B cell (primary cell): ENCODE measurements at regions of chr9 and their contacts with region 1.

Region 1: GRCh38 chr9:37156781-37157356 is 36.5 kb downstream of the ZCCHC7 start:
- DNase-seq: no peak
- ATAC-seq: no peak
- H3K4me3 ChIP-seq: no peak overlapping the region
- H3K4me3 Mint-ChIP-seq: no peak overlapping the region
- H3K27ac ChIP-seq: no peak overlapping the region
- H3K27ac Mint-ChIP-seq: no peak overlapping the region
- H3K4me1 ChIP-seq: peaks cover 14 to 19% of the 10 kb centered on the region in 2 donors
- H3K4me1 Mint-ChIP-seq: peaks cover 33% of the 10 kb centered on the region
- H3K27me3 ChIP-seq: no peaks in the 10 kb centered on the region
- H3K27me3 Mint-ChIP-seq: no peaks in the 10 kb centered on the region
- CTCF ChIP-seq: no peak

Region 2: DNA sequence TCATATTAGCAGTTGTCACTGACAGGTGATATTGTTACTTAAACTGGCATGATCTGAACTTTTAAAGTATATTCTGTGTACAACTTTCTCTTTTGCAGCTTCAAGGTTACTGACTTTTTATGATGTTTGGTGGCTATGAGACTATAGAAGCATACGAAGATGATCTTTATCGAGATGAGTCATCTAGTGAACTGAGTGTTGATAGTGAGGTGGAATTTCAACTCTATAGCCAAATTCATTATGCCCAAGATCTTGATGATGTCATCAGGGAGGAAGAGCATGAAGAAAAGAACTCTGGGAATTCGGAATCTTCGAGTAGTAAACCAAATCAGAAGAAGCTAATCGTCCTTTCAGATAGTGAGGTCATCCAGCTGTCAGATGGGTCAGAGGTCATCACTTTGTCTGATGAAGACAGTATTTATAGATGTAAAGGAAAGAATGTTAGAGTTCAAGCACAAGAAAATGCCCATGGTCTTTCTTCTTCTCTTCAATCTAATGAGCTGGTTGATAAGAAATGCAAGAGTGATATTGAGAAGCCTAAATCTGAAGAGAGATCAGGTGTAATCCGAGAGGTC is 30.6 kb before region 1 on chr9:
- CTCF ChIA-PET with region 1: no interaction called
- POLR2A ChIA-PET with region 1: interaction called, 10 read pairs
- intact Hi-C with region 1: no loop called
- DNase-seq: no peak
- ATAC-seq: no peak
- H3K4me3 ChIP-seq: no peak overlapping the region
- H3K4me3 Mint-ChIP-seq: no peak overlapping the region
- H3K27ac ChIP-seq: peak overlapping the region in 1 of 2 donors; percentile 44
- H3K27ac Mint-ChIP-seq: no peak overlapping the region
- H3K4me1 ChIP-seq: peaks cover 47 to 69% of the 10 kb centered on the region in 2 donors
- H3K4me1 Mint-ChIP-seq: peaks cover 32% of the 10 kb centered on the region
- H3K27me3 ChIP-seq: no peaks in the 10 kb centered on the region
- H3K27me3 Mint-ChIP-seq: no peaks in the 10 kb centered on the region
- CTCF ChIP-seq: no peak

Region 3: GRCh38 chr9:37422289-37423104 is 265.6 kb after region 1 on chr9 and contains the start of gene GRHPR:
- CTCF ChIA-PET with region 1: no interaction called
- POLR2A ChIA-PET with region 1: no interaction called
- intact Hi-C with region 1: no loop called
- DNase-seq: peak; percentile 90
- ATAC-seq: peak; percentile 99
- H3K4me3 ChIP-seq: peak within 1 kb of the TSS; percentile 80 to 88 (median 82)
- H3K4me3 Mint-ChIP-seq: peak within 1 kb of the TSS; percentile 97
- H3K27ac ChIP-seq: peak within 1 kb of the TSS; percentile 68 to 80
- H3K27ac Mint-ChIP-seq: peak within 1 kb of the TSS; percentile 92
- H3K4me1 ChIP-seq: peaks cover 18 to 31% of the 10 kb centered on the region in 2 donors
- H3K4me1 Mint-ChIP-seq: peaks cover 28% of the 10 kb centered on the region
- H3K27me3 ChIP-seq: no peaks in the 10 kb centered on the region
- H3K27me3 Mint-ChIP-seq: no peaks in the 10 kb centered on the region
- CTCF ChIP-seq: no peak
- total RNA-seq, gene GRHPR: 121 and 122 TPM in 2 replicates